ENCODE measurements at regions of chr1 and their contacts with region 1.

Region 1: GRCh38 chr1:119475866-119476439 is 31.1 kb upstream of the HSD3B1 start:
- DNase-seq: peak; percentile 66 to 74
- H3K4me3 ChIP-seq: no peak overlapping the region
- H3K27ac ChIP-seq: no peak overlapping the region
- H3K4me1 ChIP-seq: peaks cover 5% of the 10 kb centered on the region
- H3K27me3 ChIP-seq: peaks cover 4% of the 10 kb centered on the region; the same call in 1 of the 2 replicates
- CTCF ChIP-seq: peak; percentile 95

Region 2: GRCh38 chr1:119410961-119411360 is 65.0 kb before region 1 on chr1:
- CTCF ChIA-PET with region 1: no interaction called
- POLR2A ChIA-PET with region 1: no interaction called
- intact Hi-C with region 1: no loop called
- DNase-seq: no peak
- H3K4me3 ChIP-seq: no peak overlapping the region
- H3K27ac ChIP-seq: no peak overlapping the region
- H3K4me1 ChIP-seq: no peaks in the 10 kb centered on the region
- H3K27me3 ChIP-seq: no peaks in the 10 kb centered on the region
- CTCF ChIP-seq: no peak

Region 3: DNA sequence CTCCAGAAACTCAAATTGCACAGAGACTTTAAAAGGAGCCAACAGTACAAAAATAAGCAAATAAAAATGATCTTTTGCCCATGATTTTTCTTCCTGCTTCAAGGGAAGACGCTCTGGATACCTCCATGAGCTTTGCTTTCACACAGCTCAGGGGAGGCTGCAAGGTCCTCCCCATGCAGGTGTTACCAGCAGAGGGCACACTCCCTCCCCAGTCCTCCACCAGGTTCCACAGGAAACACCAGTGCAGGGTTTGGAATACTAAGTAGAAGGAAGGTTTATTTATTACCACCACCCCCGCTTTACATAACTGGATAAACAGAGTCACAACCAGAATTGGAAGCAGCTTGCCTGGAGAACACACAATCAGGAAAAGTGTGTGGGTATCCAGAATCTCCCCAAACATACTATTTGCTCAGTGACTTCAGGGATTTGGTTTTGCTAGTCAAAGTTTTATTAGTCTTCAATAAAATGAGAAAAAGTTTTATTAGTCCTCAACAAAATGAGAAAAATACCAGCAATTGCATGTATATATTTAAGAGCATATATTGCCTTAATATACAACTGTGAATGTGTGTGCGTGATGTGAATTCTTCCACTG is 68.3 kb after region 1 on chr1:
- CTCF ChIA-PET with region 1: no interaction called
- POLR2A ChIA-PET with region 1: no interaction called
- intact Hi-C with region 1: loop called (anchors 5 kb)
- DNase-seq: peak in 1 of 2 experiments; percentile 7
- H3K4me3 ChIP-seq: no peak overlapping the region
- H3K27ac ChIP-seq: no peak overlapping the region
- H3K4me1 ChIP-seq: peaks cover 36% of the 10 kb centered on the region
- H3K27me3 ChIP-seq: no peaks in the 10 kb centered on the region
- CTCF ChIP-seq: peak; percentile 59; the same call in 1 of the 2 replicates

Measured in PC-9 (cell line).